ENCODE measurements at regions of chr22 and their contacts with region 1.

Region 1: DNA sequence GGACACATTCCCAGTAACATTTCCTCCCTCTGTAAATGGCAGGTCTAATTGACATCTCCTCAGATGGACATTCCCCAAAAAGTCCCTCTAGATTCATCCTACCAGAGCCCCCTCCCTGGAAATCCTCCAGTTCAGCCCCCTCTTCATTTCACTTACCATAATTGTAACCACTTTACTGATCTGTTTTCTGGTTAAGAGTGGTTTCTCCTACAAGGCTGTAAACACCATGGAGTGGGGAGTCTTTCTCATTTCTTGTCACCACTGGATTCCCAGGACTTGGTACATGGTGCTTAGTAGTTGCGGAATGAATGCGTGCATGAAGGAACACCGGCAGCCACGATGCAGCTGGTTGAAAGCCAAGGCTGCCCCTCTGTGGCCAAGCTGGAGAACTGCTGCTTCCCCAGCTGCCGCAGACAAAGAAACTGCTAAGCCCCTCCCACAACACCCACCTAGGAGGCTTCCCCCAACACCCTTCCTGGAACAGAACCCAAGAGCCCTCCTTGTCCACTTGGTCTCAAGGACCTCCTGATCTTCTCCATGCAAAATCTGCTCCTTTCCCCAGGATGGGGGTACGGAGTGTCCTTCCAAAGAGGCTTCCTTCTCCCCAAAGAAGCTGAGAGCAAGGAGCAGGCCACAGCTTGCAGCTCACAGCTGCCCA is 18.6 kb upstream of the SCARF2 start:
- DNase-seq: peak; percentile 68
- H3K4me3 Mint-ChIP-seq: no peak overlapping the region
- H3K27ac Mint-ChIP-seq: peak overlapping the region; percentile 51
- H3K4me1 Mint-ChIP-seq: peaks cover 18% of the 10 kb centered on the region
- H3K27me3 Mint-ChIP-seq: no peaks in the 10 kb centered on the region

Region 2: GRCh38 chr22:20418211-20418788 is 37.9 kb before region 1 on chr22:
- intact Hi-C with region 1: loop called (anchors 1 kb)
- DNase-seq: peak; percentile 70
- H3K4me3 Mint-ChIP-seq: no peak overlapping the region
- H3K27ac Mint-ChIP-seq: no peak overlapping the region
- H3K4me1 Mint-ChIP-seq: no peaks in the 10 kb centered on the region
- H3K27me3 Mint-ChIP-seq: peaks cover 9% of the 10 kb centered on the region

Region 3: GRCh38 chr22:20472629-20473442 is 16.6 kb after region 1 on chr22:
- intact Hi-C with region 1: no loop called
- DNase-seq: no peak
- H3K4me3 Mint-ChIP-seq: no peak overlapping the region
- H3K27ac Mint-ChIP-seq: peak overlapping the region; percentile 75
- H3K4me1 Mint-ChIP-seq: peaks cover 35% of the 10 kb centered on the region
- H3K27me3 Mint-ChIP-seq: no peaks in the 10 kb centered on the region